AG04450 (cell line): ENCODE measurements at regions of chr12 and their contacts with region 1.

Region 1: DNA sequence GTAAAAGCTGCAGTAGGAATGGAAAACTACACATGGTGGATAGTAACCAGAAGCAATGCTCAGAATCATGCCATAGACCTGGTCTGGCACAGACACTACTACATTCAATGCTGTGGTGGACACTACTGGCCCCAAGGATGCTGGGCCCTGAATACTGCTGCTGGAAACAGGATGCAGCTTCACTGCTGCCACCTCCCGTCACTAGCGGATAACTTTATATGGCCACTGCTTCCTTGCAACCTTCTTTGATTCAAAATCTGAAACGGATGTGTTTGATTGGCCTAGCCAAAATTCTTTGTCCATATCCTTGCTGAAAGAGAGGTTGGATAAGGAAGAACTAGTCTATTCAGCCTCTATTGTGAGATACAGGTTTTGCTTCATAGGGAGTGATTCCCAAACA is 30.7 kb downstream of the ADCY6 start:
- DNase-seq: no peak
- H3K4me3 ChIP-seq: no peak overlapping the region
- H3K27ac ChIP-seq: no peak overlapping the region
- H3K27me3 ChIP-seq: no peaks in the 10 kb centered on the region
- CTCF ChIP-seq: no peak

Region 2: GRCh38 chr12:48716493-48717251 is 41.5 kb before region 1 on chr12 and contains the start of gene CCNT1:
- CTCF ChIA-PET with region 1: interaction called, 10 read pairs
- POLR2A ChIA-PET with region 1: no interaction called
- DNase-seq: peak; percentile 99
- H3K4me3 ChIP-seq: peak within 1 kb of the TSS; percentile 95
- H3K27ac ChIP-seq: peak within 1 kb of the TSS; percentile 97
- H3K27me3 ChIP-seq: no peaks in the 10 kb centered on the region
- CTCF ChIP-seq: peak; percentile 54
- polyA plus RNA-seq, gene CCNT1: 23.7 and 30.8 TPM in 2 replicates

Region 3: GRCh38 chr12:48773686-48774085 is 15.5 kb after region 1 on chr12:
- CTCF ChIA-PET with region 1: interaction called, 15 read pairs
- POLR2A ChIA-PET with region 1: no interaction called
- DNase-seq: no peak
- H3K4me3 ChIP-seq: no peak overlapping the region
- H3K27ac ChIP-seq: no peak overlapping the region
- H3K27me3 ChIP-seq: no peaks in the 10 kb centered on the region
- CTCF ChIP-seq: no peak

Region 4: DNA sequence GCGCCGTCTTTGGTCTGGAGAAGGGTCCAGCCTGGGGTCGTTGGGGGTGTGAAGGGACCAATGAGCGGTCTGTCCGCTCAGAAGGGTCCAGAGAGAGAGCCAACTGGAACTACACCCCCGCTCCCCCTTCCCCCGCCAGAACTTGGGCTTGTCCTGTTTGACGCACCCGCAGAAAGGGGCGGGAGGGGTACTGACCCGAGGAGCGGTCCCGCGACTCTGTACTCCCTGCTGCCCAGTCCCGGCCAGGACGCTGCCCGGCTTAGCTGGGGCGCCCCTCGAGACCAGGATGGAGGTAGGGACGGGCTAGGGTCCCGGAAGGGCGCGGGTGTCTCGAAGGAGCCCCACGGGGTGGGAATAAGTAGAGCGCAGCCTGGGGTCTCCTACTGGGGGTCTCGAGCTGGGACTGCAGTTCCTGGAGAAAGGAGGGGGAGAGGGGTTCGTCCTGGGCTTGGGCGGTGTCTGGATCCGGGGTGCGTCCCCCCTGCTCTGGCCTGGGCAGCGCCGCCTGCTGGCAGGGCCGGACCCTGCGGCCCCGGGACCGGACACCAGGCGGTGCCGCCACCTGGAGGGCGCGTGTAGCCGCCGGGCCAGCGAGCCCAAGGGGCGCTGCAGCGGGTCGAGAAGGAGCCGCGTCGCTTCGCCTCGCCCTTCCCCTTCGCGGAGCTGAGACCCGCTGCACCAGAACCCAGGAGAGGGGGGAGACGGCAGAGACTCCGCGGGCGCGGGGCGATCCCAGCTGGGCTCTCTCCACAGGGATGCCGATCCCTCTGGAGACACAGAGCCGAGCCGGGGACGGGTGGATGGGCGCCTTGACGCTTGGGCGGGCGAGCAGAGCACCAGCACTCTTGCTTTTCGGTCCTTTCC is 56.3 kb after region 1 on chr12:
- CTCF ChIA-PET with region 1: interaction called, 40 read pairs
- POLR2A ChIA-PET with region 1: interaction called, 4 read pairs
- DNase-seq: no peak
- H3K4me3 ChIP-seq: peak overlapping the region; percentile 90
- H3K27ac ChIP-seq: peak overlapping the region; percentile 99
- H3K27me3 ChIP-seq: no peaks in the 10 kb centered on the region
- CTCF ChIP-seq: peak; percentile 93

Region 5: GRCh38 chr12:48873096-48873495 is 114.9 kb after region 1 on chr12:
- CTCF ChIA-PET with region 1: no interaction called
- POLR2A ChIA-PET with region 1: no interaction called
- DNase-seq: no peak
- H3K4me3 ChIP-seq: no peak overlapping the region
- H3K27ac ChIP-seq: no peak overlapping the region
- H3K27me3 ChIP-seq: peaks cover 7% of the 10 kb centered on the region
- CTCF ChIP-seq: no peak